T-cell (primary cell): ENCODE measurements at regions of chrX and their contacts with region 1.

Region 1: DNA sequence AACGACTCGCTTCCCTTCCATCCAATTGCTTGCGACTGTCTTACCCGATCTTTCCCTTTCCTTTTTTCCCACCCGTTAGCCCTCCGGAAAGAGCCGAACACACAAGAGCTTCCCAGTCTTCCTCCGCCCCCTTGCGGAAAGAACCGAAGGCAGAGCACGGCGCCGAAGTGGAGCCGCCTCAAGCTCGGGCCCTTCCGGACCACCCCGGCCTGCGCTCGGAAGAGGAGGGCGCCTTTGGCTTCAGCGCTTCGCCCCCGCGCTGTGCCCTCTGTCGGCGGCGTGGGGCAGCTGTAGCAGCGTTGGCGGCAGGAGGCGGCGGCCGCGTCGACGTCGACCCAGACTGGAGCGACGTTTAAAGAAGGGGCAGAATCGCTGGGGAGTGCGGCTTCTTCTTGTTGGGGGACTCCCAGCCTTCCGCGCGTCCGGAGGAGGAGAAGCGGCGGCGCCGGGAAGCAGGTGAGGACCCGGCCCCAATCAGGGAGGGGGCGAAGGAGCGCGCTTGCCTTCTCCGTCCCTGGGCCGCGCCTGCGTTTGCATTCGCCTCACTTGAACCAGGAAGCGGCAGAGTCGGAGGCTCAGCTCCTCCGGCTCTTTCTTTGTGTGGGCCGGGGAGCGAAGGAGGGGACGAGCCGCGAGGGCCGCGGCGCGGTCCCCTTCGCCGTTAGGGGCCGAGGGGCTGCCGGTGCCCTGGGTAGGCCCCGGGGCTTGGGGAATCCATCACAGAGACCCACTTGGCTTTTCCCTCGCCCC is at the start of gene ZBTB33:
- DNase-seq: peak; percentile 67 to 91 (median 82)
- ATAC-seq: peak; percentile 99 to 100 (median 99)
- H3K4me3 ChIP-seq: peak within 1 kb of the TSS; percentile 64 to 79
- H3K4me3 Mint-ChIP-seq: peak within 1 kb of the TSS; percentile 91 to 92 (median 91)
- H3K27ac ChIP-seq: peak within 1 kb of the TSS; percentile 89
- H3K27ac Mint-ChIP-seq: peak within 1 kb of the TSS; percentile 91 to 97
- H3K4me1 ChIP-seq: peaks cover 0 to 5% of the 10 kb centered on the region in 2 experiments
- H3K4me1 Mint-ChIP-seq: peaks cover 7 to 31% (median 30%) of the 10 kb centered on the region in 3 donors
- H3K27me3 ChIP-seq: no peaks in the 10 kb centered on the region
- H3K27me3 Mint-ChIP-seq: peaks cover 0 to 27% of the 10 kb centered on the region in 2 donors
- total RNA-seq, gene ZBTB33: 20.9 to 25.7 (median 22.1) TPM

Region 2: DNA sequence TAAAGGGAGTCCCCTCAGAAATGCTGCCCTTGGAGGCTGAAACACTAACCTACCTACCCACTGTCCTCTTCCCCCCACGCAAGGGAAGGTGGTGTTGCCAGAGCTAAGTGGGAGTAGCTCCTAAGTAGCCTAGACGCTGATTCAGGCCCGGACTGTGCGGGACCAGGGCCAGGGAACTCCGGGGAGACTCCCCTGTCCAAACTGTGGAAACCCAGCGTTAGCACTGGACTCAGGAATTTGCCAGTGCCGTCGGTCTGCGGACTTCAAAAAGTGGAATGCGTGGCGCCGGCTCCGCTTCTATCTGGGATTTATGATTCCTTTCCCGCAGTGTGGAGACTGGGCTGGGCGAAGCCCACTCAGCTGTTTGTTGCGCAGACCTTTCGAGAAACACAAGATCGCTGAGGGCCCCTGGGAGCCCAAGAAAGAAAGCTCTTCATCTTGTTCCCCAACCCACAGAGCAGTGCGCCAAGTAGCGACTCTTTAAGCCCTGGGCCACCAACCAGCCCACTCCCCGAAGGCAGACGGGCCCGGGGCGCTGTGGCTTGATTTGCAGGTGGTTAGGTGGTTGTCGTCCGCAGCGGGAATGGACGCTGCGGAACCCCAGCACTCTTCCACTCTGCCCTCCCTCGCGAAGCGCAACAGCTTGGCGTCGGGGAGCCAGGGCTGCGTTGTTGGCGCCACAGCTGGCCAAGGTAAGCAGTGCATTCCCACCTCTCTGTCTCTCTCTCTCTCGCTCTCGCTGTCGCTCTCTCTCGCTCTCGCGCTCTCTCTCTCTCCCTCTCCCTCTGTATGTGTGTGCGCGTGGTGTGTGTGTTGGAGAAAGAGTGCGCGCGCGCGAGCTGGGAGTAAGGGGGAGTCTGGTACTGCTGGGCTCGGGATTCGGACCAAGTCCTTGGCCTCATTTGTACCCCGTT is 58.5 kb after region 1 on chrX:
- CTCF ChIA-PET with region 1: interaction called in 1 of 2 experiments, 11 read pairs
- POLR2A ChIA-PET with region 1: interaction called in 1 of 2 experiments, 5 read pairs
- DNase-seq: peak; percentile 33 to 82 (median 63)
- ATAC-seq: peak; percentile 90 to 95 (median 93)
- H3K4me3 ChIP-seq: peak overlapping the region; percentile 52 to 58
- H3K4me3 Mint-ChIP-seq: peak overlapping the region; percentile 78 to 80 (median 78)
- H3K27ac ChIP-seq: no peak overlapping the region
- H3K27ac Mint-ChIP-seq: peak overlapping the region; percentile 72 to 79
- H3K4me1 ChIP-seq: peaks cover 0 to 37% of the 10 kb centered on the region in 2 experiments
- H3K4me1 Mint-ChIP-seq: peaks cover 10 to 33% (median 20%) of the 10 kb centered on the region in 3 donors
- H3K27me3 ChIP-seq: peaks cover 3 to 30% of the 10 kb centered on the region in 2 experiments
- H3K27me3 Mint-ChIP-seq: peaks cover 31 to 54% of the 10 kb centered on the region in 2 donors

Region 3: DNA sequence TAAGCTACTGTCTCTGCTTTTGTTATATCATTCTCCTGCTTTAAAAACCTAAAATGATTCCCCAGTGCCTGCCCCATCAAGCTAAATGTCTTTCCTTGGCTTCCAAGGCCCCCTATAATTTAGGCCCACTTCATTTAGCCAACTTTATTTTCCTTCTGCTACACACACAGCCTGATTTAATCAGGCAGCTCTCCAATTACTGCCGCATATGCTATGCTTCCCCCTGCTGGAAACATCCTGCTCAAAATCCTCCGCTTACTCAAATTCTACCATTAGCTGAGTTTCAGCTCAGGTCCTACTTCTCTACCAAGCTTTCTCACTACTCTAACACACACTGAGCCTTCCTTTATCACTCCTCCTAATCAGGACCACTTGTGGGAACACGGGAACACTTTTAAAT is 201.4 kb after region 1 on chrX:
- CTCF ChIA-PET with region 1: interaction called in 1 of 2 experiments, 10 read pairs
- POLR2A ChIA-PET with region 1: no interaction called
- DNase-seq: peak in 3 of 35 experiments; percentile 7 to 30 (median 10)
- ATAC-seq: peak in 1 of 4 experiments; percentile 49
- H3K4me3 ChIP-seq: no peak overlapping the region
- H3K4me3 Mint-ChIP-seq: no peak overlapping the region
- H3K27ac ChIP-seq: no peak overlapping the region
- H3K27ac Mint-ChIP-seq: peak overlapping the region in 1 of 2 donors; percentile 13
- H3K4me1 ChIP-seq: peaks cover 2 to 9% of the 10 kb centered on the region in 2 experiments
- H3K4me1 Mint-ChIP-seq: peaks cover 3 to 28% (median 13%) of the 10 kb centered on the region in 3 donors
- H3K27me3 ChIP-seq: no peaks in the 10 kb centered on the region
- H3K27me3 Mint-ChIP-seq: no peaks in the 10 kb centered on the region

Region 4: DNA sequence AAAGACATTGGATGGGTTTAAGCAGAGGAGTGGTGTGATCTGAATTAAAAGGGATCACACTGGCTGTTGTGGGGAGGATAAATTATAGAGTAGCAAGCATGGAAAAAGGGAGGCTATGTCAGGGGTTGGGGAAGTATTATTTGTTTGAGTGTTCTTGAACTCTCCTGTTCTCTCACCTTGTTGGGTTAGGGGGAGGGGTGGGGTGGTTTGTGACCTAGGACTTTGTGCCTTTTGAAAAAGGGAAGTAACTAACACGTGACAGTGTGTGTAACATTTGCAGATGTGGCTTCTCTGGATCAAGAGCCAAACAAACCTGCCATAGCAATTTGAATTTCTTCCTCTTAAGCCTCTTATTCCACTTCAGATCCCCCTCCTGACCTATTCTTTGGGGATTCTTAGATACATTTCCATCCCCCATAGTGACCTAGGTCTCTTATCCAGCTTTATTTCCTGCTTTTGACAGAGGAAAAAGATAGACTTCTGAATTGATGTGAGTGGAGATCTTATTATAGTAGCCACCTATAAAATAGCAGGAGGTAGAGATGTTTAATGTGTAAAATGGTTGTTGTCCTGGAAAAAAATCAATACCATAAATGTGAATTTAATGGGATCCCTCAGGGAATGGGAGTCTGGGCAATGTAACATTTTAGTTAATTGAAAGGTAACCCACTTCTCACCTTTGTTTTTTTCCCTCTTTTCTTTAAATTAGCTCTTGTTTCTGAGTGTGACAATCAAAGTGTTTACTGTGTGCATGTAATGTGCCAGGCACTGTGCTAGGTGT is 504.6 kb after region 1 on chrX:
- CTCF ChIA-PET with region 1: no interaction called
- POLR2A ChIA-PET with region 1: no interaction called
- DNase-seq: peak in 27 of 35 experiments; percentile 4 to 44 (median 17)
- ATAC-seq: peak in 3 of 4 experiments; percentile 41 to 79 (median 60)
- H3K4me3 ChIP-seq: no peak overlapping the region
- H3K4me3 Mint-ChIP-seq: peak overlapping the region in 1 of 3 donors; percentile 2
- H3K27ac ChIP-seq: no peak overlapping the region
- H3K27ac Mint-ChIP-seq: peak overlapping the region; percentile 30 to 76
- H3K4me1 ChIP-seq: peaks cover 15 to 31% of the 10 kb centered on the region in 2 experiments
- H3K4me1 Mint-ChIP-seq: peaks cover 34 to 43% (median 38%) of the 10 kb centered on the region in 3 donors
- H3K27me3 ChIP-seq: no peaks in the 10 kb centered on the region
- H3K27me3 Mint-ChIP-seq: peaks cover 0 to 8% of the 10 kb centered on the region in 2 donors